ENCODE measurements at regions of chr15 and their contacts with region 1.

Region 1: DNA sequence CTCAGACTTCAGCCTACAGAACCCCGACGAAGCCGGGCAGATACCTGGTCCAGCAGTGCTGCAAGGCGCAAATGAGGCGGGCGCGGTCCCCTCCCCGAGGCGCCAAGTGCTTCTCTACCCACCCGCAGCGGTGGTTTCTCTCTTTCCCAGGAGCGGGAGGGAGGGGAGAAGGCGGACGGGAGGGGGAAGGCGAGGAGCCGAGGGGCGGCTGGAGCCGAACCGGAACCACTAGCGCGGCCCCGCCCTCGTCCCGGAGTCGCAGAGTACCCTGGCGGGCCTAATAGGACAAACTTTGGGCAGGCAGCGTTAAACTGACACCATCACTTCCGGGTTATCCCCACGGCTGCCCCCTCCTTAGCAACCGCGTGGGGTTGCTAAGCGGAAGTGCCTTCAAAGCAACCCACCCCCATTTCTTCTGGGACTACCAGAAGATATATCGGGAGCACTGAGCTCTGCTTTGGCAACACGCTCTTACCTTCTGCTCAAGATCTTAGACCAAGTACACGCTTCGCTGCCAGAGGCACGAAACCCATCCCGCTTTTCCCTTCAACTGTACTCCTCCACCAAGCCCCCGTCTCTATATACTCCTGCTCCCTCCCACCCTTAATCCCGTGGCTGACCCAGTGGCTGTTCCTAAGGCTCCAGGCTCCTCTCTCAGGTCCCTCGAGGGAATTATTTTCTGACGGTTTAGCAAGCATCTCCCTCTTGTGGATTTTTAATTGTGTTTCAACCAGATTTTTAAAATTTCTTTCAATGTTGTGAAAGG is at the start of gene CSNK1G1:
- DNase-seq: peak; percentile 94 to 98 (median 97)
- H3K4me3 ChIP-seq: peak within 1 kb of the TSS; percentile 82 to 98 (median 96)
- H3K27ac ChIP-seq: peak within 1 kb of the TSS in 4 of 5 donors; percentile 2 to 83 (median 67)
- H3K4me1 ChIP-seq: peaks cover 10 to 24% of the 10 kb centered on the region in 2 donors
- H3K27me3 ChIP-seq: no peaks in the 10 kb centered on the region
- CTCF ChIP-seq: peak; percentile 22 to 82 (median 58)
- POLR2A ChIP-seq: peak in 1 of 2 donors; percentile 31
- total RNA-seq, gene CSNK1G1: 8.0 to 31.6 (median 17.6) TPM

Region 2: DNA sequence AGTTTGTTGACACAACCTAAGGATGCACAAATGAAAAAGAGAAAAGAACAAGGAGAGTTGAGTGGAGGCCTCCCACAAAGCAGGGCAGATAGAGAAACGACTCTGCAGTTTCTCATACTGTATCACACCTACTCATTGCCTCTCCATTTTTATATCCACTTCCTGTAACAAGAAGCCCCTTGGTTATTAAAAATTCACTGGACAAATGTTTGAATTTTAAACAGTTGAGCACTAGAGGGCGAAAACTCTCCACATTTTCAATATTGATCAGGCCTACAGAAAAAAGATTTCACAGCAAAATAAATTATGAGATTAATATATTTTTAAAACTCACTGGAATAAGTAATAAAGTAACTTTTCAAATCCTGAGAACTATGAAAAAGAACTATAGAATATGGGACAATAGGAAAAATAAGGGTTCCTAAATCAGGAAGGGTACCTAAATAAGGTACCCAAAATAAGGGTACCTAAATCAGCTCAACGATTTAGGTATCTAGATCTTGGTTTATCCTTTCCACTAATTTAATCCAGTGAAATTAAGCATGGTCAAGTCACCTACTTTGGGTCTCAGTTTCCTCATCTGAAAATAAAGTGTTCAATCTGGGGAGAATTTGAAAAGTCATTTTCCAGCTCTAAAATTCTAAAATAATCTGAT is 146.3 kb before region 1 on chr15:
- intact Hi-C with region 1: loop called (anchors 2 to 5 kb)
- DNase-seq: no peak
- H3K4me3 ChIP-seq: no peak overlapping the region
- H3K27ac ChIP-seq: no peak overlapping the region
- H3K4me1 ChIP-seq: no peaks in the 10 kb centered on the region
- H3K27me3 ChIP-seq: no peaks in the 10 kb centered on the region
- CTCF ChIP-seq: peak; percentile 28 to 72 (median 54)
- POLR2A ChIP-seq: no peak

Region 3: GRCh38 chr15:64412216-64412615 is 56.1 kb after region 1 on chr15:
- intact Hi-C with region 1: no loop called
- DNase-seq: no peak
- H3K4me3 ChIP-seq: no peak overlapping the region
- H3K27ac ChIP-seq: no peak overlapping the region
- H3K4me1 ChIP-seq: no peaks in the 10 kb centered on the region
- H3K27me3 ChIP-seq: no peaks in the 10 kb centered on the region
- CTCF ChIP-seq: no peak
- POLR2A ChIP-seq: no peak

Region 4: DNA sequence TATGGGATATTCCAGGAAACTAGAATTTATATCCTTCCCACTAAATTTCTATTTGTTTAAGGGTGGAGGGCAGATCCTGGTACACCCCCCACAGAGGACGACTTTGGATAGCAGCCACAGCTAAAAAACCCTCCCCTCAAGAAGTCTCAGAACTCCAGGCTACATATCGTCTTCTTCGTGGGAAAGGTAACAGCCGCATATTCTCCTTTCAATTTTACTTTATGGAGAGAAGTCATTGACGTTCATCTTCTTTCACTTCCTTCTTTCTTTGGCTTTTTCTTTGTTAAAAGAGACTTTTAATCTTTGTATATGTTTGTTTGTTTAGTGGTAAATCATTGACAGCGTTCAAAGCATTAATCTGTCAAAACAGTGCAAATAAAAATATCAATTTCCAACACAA is 67.8 kb after region 1 on chr15:
- intact Hi-C with region 1: no loop called
- DNase-seq: no peak
- H3K4me3 ChIP-seq: no peak overlapping the region
- H3K27ac ChIP-seq: no peak overlapping the region
- H3K4me1 ChIP-seq: no peaks in the 10 kb centered on the region
- H3K27me3 ChIP-seq: no peaks in the 10 kb centered on the region
- CTCF ChIP-seq: no peak
- POLR2A ChIP-seq: no peak

Measured in adrenal gland (tissue), 19 donors.